ENCODE measurements at regions of chr22 and their contacts with region 1.

Region 1: DNA sequence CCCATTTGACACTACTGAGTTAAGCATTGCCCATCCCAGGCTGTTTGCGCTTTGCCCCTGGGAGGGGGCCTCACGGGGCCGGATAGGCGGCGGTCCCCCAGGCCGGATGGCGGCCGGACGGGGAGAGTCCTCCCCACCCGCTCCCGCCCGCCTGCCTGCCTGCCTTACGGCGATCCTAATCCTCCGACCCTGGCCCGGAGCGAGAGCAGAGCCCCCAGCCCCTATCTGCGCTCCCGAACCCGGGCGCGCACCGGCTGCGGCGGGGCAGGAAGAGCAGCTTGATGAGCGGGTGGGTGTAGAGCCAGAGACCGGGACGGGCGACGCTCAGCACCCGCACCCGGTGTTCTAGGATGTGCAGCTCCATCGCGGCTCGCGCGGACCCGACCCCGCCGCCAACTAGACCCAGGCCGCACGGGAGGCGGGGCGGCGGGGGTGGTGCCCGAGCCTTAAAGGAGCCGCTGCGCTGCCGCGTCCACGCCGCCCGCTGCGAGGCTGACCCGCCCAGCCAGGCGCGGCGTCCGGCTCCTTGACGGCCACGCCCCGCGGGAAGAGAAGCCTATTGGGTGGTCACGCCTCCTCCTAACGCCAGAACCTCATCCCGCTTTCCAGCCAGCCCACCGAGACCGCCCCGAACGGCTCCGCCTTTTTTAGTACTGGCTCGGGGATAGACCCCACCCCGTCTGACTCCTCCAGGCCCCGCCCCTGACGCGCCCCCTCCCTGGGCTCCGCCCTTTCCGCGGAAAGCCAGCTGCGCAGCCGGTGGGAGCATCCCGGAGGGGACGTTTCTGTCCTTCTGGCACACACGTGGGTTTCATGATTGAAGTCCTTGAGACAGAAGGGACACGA is at the start of gene CASTOR1:
- DNase-seq: peak; percentile 96
- H3K4me3 Mint-ChIP-seq: peak within 1 kb of the TSS; percentile 81
- H3K27ac Mint-ChIP-seq: peak within 1 kb of the TSS; percentile 87
- H3K4me1 Mint-ChIP-seq: peaks cover 72% of the 10 kb centered on the region
- H3K27me3 Mint-ChIP-seq: no peaks in the 10 kb centered on the region

Region 2: GRCh38 chr22:30104501-30105156 is 184.7 kb before region 1 on chr22:
- CTCF ChIA-PET with region 1: interaction called, 68 read pairs
- DNase-seq: peak; percentile 27
- H3K4me3 Mint-ChIP-seq: peak overlapping the region; percentile 7
- H3K27ac Mint-ChIP-seq: peak overlapping the region; percentile 67
- H3K4me1 Mint-ChIP-seq: peaks cover 72% of the 10 kb centered on the region
- H3K27me3 Mint-ChIP-seq: no peaks in the 10 kb centered on the region

Region 3: DNA sequence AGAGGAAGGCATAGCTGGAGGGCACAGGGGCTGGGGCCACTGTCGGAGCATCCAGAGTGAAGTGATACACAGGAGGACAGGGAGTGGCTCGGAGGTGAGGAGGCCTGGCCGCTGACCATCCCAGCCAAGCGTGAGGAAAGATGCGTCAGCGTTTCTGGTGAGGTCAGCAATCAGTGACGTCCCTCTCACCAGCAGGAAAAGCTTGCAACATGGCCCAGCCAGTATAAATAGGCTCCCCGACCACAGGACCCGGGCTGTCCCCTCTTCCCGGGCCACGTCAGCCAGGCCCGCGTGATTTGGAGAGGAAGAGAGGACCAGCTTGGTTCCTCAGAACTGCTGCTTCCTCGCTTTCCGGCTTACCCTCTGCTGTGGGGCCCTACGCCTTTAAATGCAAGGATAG is 18.5 kb before region 1 on chr22:
- CTCF ChIA-PET with region 1: interaction called, 14 read pairs
- DNase-seq: no peak
- H3K4me3 Mint-ChIP-seq: no peak overlapping the region
- H3K27ac Mint-ChIP-seq: no peak overlapping the region
- H3K4me1 Mint-ChIP-seq: peaks cover 65% of the 10 kb centered on the region
- H3K27me3 Mint-ChIP-seq: no peaks in the 10 kb centered on the region

Region 4: DNA sequence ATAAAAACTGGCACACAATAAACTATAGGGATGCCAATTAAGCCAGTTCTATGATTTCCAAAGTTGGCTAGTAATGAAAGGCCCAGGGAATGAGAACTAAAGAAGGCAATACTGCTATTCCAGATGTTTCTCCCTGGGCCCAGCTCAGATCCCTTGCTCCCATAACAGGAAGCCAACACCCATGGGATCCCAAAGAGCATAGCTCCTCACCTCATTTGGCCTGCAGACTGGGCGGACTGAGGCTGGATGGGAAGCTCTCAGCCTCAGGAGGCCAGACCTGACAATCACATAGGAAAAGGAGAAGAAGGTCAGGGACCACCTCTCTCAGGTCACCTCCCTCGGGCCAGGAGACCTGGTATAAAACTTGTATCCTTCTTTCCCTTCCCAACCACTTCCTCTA is 32.1 kb after region 1 on chr22:
- CTCF ChIA-PET with region 1: interaction called, 62 read pairs
- DNase-seq: no peak
- H3K4me3 Mint-ChIP-seq: no peak overlapping the region
- H3K27ac Mint-ChIP-seq: no peak overlapping the region
- H3K4me1 Mint-ChIP-seq: peaks cover 87% of the 10 kb centered on the region
- H3K27me3 Mint-ChIP-seq: no peaks in the 10 kb centered on the region

Region 5: DNA sequence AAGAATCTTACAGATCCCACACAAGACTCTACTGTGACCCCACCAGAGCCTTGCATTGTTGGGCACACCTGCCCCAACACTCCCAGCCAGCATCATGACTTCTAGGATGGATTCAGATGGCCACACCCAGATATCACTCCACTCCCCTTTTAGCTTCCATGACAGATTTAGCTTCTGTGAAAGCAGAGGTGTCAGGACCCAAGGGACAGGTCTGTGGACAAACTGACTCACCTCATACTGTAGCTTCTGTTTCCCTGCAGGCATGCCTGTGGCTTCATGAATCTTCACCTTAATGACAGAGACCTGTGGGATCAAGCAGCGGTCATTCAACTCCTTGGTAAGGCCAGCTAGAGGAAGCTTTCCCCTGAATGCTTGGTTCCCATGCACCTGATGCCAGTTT is 45.9 kb after region 1 on chr22:
- CTCF ChIA-PET with region 1: interaction called, 11 read pairs
- DNase-seq: no peak
- H3K4me3 Mint-ChIP-seq: no peak overlapping the region
- H3K27ac Mint-ChIP-seq: no peak overlapping the region
- H3K4me1 Mint-ChIP-seq: peaks cover 27% of the 10 kb centered on the region
- H3K27me3 Mint-ChIP-seq: no peaks in the 10 kb centered on the region

Region 6: DNA sequence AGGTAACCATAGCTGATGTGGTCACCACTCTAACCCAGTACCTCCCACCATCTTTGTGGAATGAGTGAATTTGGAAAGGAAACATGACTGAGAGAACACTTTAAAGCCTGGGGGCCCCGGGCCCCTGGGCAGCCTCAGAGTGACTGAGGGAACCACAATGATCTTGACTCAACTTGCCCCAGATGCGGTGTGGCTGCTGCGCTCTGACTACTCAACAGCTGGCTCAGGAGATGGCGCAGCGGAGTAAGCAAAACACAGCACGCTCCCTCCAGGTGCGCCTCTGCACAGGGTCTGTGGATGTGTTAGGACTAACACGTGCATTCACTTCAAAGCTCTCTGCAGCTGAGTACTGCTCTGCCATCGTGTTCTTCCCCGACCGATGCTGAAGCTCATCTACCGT is 91.9 kb after region 1 on chr22:
- CTCF ChIA-PET with region 1: interaction called, 252 read pairs
- DNase-seq: no peak
- H3K4me3 Mint-ChIP-seq: no peak overlapping the region
- H3K27ac Mint-ChIP-seq: no peak overlapping the region
- H3K4me1 Mint-ChIP-seq: peaks cover 2% of the 10 kb centered on the region
- H3K27me3 Mint-ChIP-seq: peaks cover 12% of the 10 kb centered on the region

Region 7: GRCh38 chr22:30396871-30397655 is 107.7 kb after region 1 on chr22 and contains the start of gene SEC14L2:
- CTCF ChIA-PET with region 1: interaction called, 252 read pairs
- DNase-seq: peak; percentile 80
- H3K4me3 Mint-ChIP-seq: peak within 1 kb of the TSS; percentile 83
- H3K27ac Mint-ChIP-seq: no peak within 1 kb of the TSS
- H3K4me1 Mint-ChIP-seq: peaks cover 51% of the 10 kb centered on the region
- H3K27me3 Mint-ChIP-seq: peaks cover 25% of the 10 kb centered on the region

Measured in activated naive CD4-positive, alpha-beta T cell treated with anti-CD3 and anti-CD28 coated beads, Interleukin-2, amount 10 ng/mL, durations not matched to agents 7 days and 5 days (primary cell).